Thyroid gland (tissue), 4 donors: ENCODE measurements at regions of chr14 and their contacts with region 1.

Region 1: DNA sequence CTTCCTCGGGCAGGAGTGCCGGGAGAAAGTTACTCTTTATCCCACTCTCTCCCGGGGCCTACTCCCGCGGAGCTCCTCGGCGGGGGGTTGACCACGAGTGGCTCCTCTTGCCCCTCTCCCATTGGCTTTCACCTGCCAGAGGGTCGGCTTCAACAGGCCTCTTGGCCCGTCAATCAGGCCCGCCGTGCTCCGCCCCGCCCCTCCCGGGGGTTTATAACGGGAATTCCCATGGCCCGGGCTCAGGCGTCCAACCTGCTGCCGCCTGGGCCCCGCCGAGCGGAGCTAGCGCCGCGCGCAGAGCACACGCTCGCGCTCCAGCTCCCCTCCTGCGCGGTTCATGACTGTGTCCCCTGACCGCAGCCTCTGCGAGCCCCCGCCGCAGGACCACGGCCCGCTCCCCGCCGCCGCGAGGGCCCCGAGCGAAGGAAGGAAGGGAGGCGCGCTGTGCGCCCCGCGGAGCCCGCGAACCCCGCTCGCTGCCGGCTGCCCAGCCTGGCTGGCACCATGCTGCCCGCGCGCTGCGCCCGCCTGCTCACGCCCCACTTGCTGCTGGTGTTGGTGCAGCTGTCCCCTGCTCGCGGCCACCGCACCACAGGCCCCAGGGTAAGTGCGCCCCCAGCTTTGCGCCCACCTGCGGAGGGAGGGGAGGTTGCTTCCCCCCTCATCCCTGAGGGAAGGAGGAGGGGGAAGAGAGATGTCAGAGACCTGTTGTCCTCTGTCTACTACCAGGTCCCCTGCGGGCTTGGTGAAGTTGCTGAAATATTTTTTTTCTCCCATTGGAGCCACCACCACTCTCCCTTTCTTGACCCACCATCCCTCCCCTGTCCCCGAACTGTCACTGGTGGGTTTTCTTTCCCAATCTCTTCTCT is at the start of gene SMOC1:
- DNase-seq: peak; percentile 64 to 71
- H3K4me3 ChIP-seq: peak within 1 kb of the TSS in 2 of 3 donors; percentile 11 to 35
- H3K27ac ChIP-seq: no peak within 1 kb of the TSS
- H3K4me1 ChIP-seq: peaks cover 0 to 19% of the 10 kb centered on the region in 2 donors
- H3K27me3 ChIP-seq: no peaks in the 10 kb centered on the region
- CTCF ChIP-seq: no peak
- POLR2A ChIP-seq: peak in 1 of 2 donors; percentile 56
- total RNA-seq, gene SMOC1: 3.4 to 7.3 (median 3.7) TPM

Region 2: GRCh38 chr14:69708586-69709174 is 170.7 kb before region 1 on chr14:
- intact Hi-C with region 1: no loop called
- DNase-seq: no peak
- H3K4me3 ChIP-seq: no peak overlapping the region
- H3K27ac ChIP-seq: no peak overlapping the region
- H3K4me1 ChIP-seq: peaks cover 25 to 47% of the 10 kb centered on the region in 2 donors
- H3K27me3 ChIP-seq: no peaks in the 10 kb centered on the region
- CTCF ChIP-seq: no peak
- POLR2A ChIP-seq: no peak

Region 3: GRCh38 chr14:69945912-69946311 is 66.5 kb after region 1 on chr14:
- intact Hi-C with region 1: no loop called
- DNase-seq: no peak
- H3K4me3 ChIP-seq: no peak overlapping the region
- H3K27ac ChIP-seq: no peak overlapping the region
- H3K4me1 ChIP-seq: peaks cover 30 to 32% of the 10 kb centered on the region in 2 donors
- H3K27me3 ChIP-seq: no peaks in the 10 kb centered on the region
- CTCF ChIP-seq: no peak
- POLR2A ChIP-seq: no peak

Region 4: DNA sequence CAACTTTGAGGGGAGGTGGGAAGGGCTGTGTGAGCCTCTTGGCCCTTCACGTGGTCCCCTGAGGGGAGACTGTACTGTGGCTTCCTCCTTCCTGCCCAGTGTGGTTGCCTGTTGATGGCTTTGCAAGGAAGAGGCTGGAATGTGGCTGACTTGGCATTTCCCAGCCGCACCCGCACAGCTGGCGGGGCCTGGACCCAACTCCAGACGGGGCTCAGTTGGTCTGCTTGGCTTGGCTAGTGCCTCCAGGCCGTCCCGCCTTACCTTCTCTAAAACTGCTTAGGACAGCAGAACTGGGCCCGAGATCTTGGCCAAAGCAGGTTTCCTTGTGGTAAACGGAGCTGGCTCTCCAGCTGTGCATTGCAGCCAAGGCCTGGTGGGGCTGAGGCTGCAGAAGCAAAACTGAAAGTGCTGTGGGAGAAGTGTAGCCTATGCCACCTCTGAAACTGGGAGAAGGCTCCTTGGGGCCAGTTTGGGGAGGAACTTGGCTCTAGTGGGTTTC is 139.4 kb after region 1 on chr14:
- intact Hi-C with region 1: loop called (anchors 5 kb)
- DNase-seq: peak in 1 of 2 donors; percentile 53
- H3K4me3 ChIP-seq: no peak overlapping the region
- H3K27ac ChIP-seq: no peak overlapping the region
- H3K4me1 ChIP-seq: peaks cover 3 to 7% of the 10 kb centered on the region in 2 donors
- H3K27me3 ChIP-seq: no peaks in the 10 kb centered on the region
- CTCF ChIP-seq: no peak
- POLR2A ChIP-seq: no peak

Region 5: GRCh38 chr14:70073924-70074566 is 194.6 kb after region 1 on chr14:
- intact Hi-C with region 1: no loop called
- DNase-seq: peak; percentile 44 to 57
- H3K4me3 ChIP-seq: no peak overlapping the region
- H3K27ac ChIP-seq: no peak overlapping the region
- H3K4me1 ChIP-seq: no peaks in the 10 kb centered on the region
- H3K27me3 ChIP-seq: no peaks in the 10 kb centered on the region
- CTCF ChIP-seq: peak; percentile 21 to 61 (median 43)
- POLR2A ChIP-seq: no peak